Activated T-helper 1 cell treated with anti-CD3 and anti-CD28 coated beads, Interleukin-12 subunit alpha, Interleukin-12 subunit beta, Interleukin-2, Interleukin-4 antibody, amounts not matched to agents 30 ng/mL and 10 ng/mL and 1 ng/mL, durations not matched to agents 14 hours and 24 hours and 36 hours (primary cell): ENCODE measurements at regions of chr2 and their contacts with region 1.

Region 1: DNA sequence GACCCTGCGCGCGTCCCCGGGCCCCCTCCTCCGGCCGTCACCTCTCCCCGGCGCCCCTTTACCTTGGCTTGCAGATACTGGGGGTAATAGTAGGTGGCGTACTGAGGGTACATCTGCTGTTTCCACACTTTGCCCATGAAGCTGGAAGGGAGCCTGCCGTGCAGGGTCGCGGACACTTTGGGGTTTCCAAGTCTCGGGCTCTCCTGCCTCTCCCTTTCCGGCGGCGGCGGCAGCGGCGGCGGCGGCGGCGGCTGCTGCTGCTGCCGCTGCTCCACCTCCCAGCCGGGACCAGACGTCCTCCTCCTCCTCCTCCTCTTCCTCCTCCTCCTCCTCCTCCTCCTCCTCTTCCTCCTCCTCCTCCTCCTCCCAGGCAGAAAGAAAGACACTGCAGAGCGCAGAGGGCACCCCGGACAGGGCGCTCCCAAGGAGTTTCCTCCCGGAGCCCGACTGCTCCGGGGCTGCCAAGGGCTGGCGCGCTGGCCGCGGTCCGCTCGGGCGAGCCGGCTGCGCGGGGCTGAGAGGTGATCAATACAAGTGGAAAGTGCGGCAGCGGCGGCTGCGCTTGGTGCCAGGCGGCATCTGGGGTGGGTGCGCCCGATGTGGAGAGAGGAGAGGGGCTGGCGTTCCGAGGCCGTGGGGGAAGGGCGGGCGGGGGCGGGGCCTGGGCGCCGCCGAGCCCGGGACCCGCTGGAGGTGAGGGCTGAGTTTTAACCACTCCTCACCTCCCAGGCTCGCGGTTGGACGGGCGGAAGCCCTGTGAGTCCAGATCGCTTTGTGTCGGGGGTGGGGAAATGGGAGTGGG is at the start of gene RBMS1:
- DNase-seq: peak; percentile 35
- H3K4me3 Mint-ChIP-seq: peak within 1 kb of the TSS; percentile 97
- H3K27ac Mint-ChIP-seq: peak within 1 kb of the TSS; percentile 97
- H3K4me1 Mint-ChIP-seq: peaks cover 47% of the 10 kb centered on the region
- H3K27me3 Mint-ChIP-seq: peaks cover 9% of the 10 kb centered on the region
- total RNA-seq, gene RBMS1: 35.4 and 36.3 TPM in 2 replicates

Region 2: GRCh38 chr2:160269803-160270570 is 223.4 kb before region 1 on chr2:
- intact Hi-C with region 1: loop called (anchors 5 kb)
- DNase-seq: peak; percentile 25
- H3K4me3 Mint-ChIP-seq: peak overlapping the region; percentile 62
- H3K27ac Mint-ChIP-seq: no peak overlapping the region
- H3K4me1 Mint-ChIP-seq: peaks cover 33% of the 10 kb centered on the region
- H3K27me3 Mint-ChIP-seq: peaks cover 16% of the 10 kb centered on the region

Region 3: DNA sequence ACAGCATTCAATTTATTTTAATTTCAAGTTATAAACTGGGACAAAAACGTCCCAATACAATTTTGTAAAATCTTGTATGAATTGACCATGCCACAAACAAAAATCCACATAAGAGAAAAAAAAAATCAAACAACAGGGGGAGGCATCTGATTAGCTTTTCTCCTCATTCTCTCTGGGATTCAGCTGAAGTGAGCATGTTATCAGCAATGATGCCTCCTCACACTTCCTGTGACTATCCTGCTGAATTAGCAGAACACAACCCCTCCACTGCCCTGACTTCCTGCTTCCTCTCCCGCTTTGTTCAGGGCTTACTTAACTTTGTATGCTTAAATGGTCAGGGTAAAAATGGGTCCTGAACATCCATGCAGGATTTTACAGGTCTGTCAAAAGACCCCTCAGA is 161.1 kb before region 1 on chr2:
- intact Hi-C with region 1: no loop called
- DNase-seq: no peak
- H3K4me3 Mint-ChIP-seq: peak overlapping the region; percentile 29
- H3K27ac Mint-ChIP-seq: no peak overlapping the region
- H3K4me1 Mint-ChIP-seq: peaks cover 88% of the 10 kb centered on the region
- H3K27me3 Mint-ChIP-seq: no peaks in the 10 kb centered on the region

Region 4: DNA sequence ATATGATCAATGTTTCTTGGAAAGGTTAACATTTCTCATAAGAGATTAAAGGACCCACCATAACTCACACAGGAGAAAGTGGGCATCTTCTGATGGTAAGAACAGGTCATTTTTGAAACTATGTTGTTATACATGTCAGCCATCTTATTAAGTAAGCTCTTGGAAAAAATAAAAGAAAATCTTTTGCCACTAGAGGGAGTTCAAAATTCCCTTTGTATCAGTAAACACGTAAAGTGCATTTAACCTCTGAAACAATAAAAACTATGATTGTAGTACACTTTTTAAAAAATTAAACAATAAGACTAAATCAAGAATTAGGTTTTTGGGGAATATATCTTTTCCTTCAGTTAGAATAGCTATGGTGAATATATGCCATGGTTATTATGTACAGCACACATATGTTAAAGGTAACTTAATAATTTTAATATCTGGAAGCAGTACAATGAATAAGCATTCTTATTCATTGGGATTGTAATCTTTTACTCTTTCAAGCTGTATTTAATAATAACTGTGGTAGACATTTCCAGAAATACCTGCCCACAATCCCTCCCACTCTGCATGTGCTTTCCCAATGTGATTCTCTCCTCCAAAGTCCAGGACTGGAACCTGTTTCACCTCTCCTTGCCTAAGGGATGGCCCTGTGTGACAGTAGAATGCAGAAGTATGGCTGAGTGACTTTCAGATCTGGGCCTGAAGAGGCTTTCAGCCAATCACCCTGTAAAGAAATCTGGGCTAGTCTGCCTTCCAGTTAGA is 64.0 kb before region 1 on chr2:
- intact Hi-C with region 1: loop called (anchors 1 kb)
- DNase-seq: no peak
- H3K4me3 Mint-ChIP-seq: no peak overlapping the region
- H3K27ac Mint-ChIP-seq: no peak overlapping the region
- H3K4me1 Mint-ChIP-seq: peaks cover 66% of the 10 kb centered on the region
- H3K27me3 Mint-ChIP-seq: no peaks in the 10 kb centered on the region

Region 5: DNA sequence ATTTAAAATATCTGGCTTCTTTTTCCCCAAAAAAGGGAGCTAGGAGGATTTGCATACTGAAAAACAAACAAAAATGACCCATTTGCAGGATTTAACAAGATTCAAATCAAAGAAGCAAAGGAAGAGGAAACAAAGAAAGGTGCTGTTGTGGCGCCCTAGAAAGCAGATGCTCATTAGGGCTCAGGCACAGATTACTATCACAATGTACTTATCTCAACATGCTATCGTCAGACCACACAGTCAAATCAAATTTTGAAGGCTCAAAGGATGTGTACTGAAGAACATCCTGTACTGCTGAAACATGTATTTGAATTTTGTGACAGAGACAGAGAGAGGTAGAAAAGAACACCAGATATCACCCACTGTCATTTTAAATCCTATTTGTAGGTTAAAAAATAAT is 10.8 kb before region 1 on chr2:
- intact Hi-C with region 1: loop called (anchors 1 kb)
- DNase-seq: peak; percentile 11
- H3K4me3 Mint-ChIP-seq: peak overlapping the region; percentile 5
- H3K27ac Mint-ChIP-seq: peak overlapping the region; percentile 59
- H3K4me1 Mint-ChIP-seq: peaks cover 59% of the 10 kb centered on the region
- H3K27me3 Mint-ChIP-seq: no peaks in the 10 kb centered on the region

Region 6: GRCh38 chr2:160516547-160517365 is 23.3 kb after region 1 on chr2:
- intact Hi-C with region 1: loop called (anchors 1 kb)
- DNase-seq: no peak
- H3K4me3 Mint-ChIP-seq: peak overlapping the region; percentile 31
- H3K27ac Mint-ChIP-seq: peak overlapping the region; percentile 84
- H3K4me1 Mint-ChIP-seq: peaks cover 42% of the 10 kb centered on the region
- H3K27me3 Mint-ChIP-seq: peaks cover 2% of the 10 kb centered on the region

Region 7: DNA sequence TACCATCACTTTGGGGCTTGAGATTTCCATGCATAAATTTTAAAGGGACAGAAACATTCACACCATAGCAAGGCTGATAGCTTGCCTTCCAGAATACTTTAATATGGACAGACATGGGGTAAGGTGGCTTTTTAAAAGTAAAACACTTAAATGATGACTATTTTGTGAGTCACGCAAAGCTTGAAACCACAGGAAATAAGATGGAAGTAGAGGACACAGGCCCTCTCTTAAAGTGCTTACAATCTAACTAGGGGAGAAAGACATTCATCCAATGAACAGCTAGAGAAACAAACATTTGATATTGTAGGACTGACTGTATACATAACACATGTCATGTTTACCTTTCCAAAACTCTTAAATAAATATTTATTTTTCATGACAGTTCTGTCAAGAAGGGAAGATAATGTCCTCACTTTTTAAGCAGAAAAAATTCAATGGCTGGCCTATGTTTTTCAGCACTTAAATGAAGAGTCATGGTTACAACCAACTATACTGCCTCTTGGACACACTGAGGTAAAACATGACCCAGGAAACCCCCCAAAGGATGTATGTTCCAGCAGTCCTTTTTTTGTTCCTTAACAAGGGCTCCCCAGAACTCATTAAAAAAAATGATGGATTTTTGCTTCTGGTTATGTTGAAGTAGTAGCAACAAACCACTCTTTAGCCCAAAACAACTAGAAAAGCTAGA is 120.2 kb after region 1 on chr2:
- intact Hi-C with region 1: no loop called
- DNase-seq: no peak
- H3K4me3 Mint-ChIP-seq: no peak overlapping the region
- H3K27ac Mint-ChIP-seq: no peak overlapping the region
- H3K4me1 Mint-ChIP-seq: peaks cover 4% of the 10 kb centered on the region
- H3K27me3 Mint-ChIP-seq: peaks cover 12% of the 10 kb centered on the region

Region 8: GRCh38 chr2:160703648-160704585 is 210.5 kb after region 1 on chr2:
- intact Hi-C with region 1: no loop called
- DNase-seq: peak; percentile 8
- H3K4me3 Mint-ChIP-seq: no peak overlapping the region
- H3K27ac Mint-ChIP-seq: no peak overlapping the region
- H3K4me1 Mint-ChIP-seq: peaks cover 9% of the 10 kb centered on the region
- H3K27me3 Mint-ChIP-seq: peaks cover 5% of the 10 kb centered on the region

Region 9: DNA sequence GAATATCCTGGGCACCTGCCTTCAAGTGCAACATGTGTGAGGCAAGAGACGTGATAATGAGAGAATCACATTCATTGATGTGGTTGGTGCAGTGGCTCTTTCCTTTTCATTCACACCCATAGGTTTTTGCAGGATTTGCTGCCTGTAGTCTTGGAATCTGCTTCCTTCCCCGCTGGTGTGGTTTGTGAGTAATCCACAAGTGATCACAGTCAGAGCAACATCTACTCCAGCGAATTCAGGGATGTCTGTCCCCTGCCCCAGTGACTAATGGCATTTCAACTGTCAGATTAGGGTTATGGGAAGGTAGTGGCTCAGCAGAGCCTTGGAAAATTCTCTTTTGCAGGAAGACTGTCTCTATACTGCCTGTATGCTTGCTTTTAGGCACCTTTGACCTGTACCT is 225.7 kb after region 1 on chr2:
- intact Hi-C with region 1: no loop called
- DNase-seq: no peak
- H3K4me3 Mint-ChIP-seq: no peak overlapping the region
- H3K27ac Mint-ChIP-seq: no peak overlapping the region
- H3K4me1 Mint-ChIP-seq: no peaks in the 10 kb centered on the region
- H3K27me3 Mint-ChIP-seq: peaks cover 12% of the 10 kb centered on the region

Region 10: GRCh38 chr2:161160226-161161069 is 667.0 kb after region 1 on chr2 and contains the start of gene TANK:
- intact Hi-C with region 1: loop called (anchors 5 kb)
- DNase-seq: peak; percentile 88
- H3K4me3 Mint-ChIP-seq: peak within 1 kb of the TSS; percentile 97
- H3K27ac Mint-ChIP-seq: peak within 1 kb of the TSS; percentile 99
- H3K4me1 Mint-ChIP-seq: peaks cover 81% of the 10 kb centered on the region
- H3K27me3 Mint-ChIP-seq: no peaks in the 10 kb centered on the region
- total RNA-seq, gene TANK: 136 and 141 TPM in 2 replicates